ENCODE measurements at regions of chr11 and their contacts with region 1.

Region 1: DNA sequence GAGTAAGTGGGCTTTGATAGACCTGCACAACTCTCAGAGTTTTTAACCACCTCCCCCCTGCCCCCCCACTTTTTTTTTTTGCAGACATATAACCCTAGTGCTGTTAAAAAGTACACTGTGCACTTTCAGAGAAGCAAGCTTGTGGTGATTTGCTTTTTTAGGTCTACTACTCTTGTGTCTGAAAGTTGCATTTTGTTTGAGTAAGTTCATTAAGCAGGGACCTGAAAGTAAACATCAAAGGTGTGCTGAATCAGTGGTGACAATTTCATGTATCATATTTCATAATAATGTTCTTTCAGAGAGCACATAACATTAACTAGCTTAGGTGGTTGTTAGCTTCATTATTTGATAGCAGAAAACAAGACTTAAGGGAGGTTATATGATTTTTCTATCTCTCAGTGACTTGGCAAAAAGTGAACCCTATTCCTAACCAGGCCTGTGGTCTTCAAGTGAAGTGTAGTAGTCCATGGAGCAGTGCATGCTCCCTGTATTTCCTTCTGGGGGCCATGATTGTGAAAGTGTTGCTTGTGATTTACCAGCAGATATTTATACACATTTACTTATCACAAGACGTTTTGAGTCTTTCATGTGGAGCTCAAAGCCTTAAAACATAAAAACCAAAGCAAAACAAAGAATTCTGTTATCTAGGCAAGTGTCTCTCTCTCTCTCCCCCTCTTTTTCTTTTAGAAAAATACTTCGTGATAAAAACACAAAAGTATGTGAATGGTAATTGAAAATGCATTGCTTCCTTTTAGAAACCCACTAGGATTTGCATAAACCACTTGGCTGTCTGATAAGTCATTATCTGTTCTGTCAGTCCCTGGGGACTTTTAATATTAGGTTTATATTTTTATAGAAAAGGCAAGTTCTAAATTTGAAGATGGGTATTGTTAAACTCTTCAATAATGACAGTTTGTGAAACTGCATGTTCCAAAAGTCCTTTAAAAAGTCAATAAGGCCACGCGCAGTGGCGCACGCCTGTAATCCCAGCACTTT is 7.5 kb upstream of the RAG2 start:
- DNase-seq: no peak

Region 2: GRCh38 chr11:36509694-36510566 is 95.6 kb before region 1 on chr11 and contains the start of gene TRAF6:
- intact Hi-C with region 1: loop called (anchors 10 kb)
- DNase-seq: peak; percentile 80 to 98 (median 88)

Region 3: GRCh38 chr11:36840378-36840777 is 234.9 kb after region 1 on chr11:
- intact Hi-C with region 1: no loop called
- DNase-seq: peak in 1 of 10 donors; percentile 48

Measured in posterior cingulate gyrus (tissue), 11 donors.